ENCODE measurements at regions of chr19 and their contacts with region 1.

Region 1: DNA sequence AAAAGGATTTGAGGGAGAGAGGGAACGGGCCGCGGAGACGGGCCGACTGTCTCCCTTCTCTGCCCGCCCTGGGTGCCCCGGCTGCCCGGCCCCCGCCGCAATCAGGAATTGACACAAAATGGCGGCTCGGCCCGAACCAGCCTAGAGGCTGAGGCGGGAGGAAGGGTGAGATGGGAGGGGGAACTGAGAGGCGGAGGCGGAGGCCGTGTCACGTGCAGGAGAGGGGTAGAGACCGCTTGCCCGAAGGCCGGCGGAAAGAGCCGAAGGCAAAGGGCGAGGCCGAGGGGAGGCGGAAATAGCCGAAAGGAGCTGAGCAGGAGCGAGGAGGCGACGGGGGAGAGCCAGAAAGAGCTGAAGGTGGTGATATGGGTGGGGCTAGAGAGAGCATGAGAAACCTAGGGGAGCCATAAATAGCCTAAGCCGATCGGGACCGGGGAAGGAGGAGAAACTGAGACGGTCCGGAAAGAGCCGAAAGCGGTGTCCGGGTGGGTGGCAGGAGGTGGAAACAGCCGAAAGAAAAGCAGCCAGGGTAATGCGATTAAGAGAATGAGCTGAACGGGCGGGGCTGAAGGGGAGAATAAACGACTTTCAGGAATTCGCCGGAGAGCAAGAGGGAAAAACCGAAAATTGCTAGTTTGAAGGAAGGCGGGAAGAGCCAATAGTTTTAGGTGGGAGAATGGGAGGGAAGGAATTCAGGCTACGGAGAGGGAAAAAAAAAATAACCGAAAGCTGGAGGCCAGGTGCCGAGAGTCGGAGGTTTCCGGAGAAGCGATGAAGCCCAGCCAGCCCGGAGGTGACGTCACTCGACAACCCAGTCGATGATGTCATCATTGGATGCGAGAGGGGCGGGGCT is at the start of gene ZC3H4:
- DNase-seq: peak; percentile 100
- H3K4me3 ChIP-seq: peak within 1 kb of the TSS; percentile 96
- H3K27ac ChIP-seq: peak within 1 kb of the TSS; percentile 100
- H3K4me1 ChIP-seq: peaks cover 25% of the 10 kb centered on the region
- H3K27me3 ChIP-seq: no peaks in the 10 kb centered on the region
- CTCF ChIP-seq: no peak
- total RNA-seq, gene ZC3H4: 94.4 and 94.8 TPM in 2 replicates

Region 2: DNA sequence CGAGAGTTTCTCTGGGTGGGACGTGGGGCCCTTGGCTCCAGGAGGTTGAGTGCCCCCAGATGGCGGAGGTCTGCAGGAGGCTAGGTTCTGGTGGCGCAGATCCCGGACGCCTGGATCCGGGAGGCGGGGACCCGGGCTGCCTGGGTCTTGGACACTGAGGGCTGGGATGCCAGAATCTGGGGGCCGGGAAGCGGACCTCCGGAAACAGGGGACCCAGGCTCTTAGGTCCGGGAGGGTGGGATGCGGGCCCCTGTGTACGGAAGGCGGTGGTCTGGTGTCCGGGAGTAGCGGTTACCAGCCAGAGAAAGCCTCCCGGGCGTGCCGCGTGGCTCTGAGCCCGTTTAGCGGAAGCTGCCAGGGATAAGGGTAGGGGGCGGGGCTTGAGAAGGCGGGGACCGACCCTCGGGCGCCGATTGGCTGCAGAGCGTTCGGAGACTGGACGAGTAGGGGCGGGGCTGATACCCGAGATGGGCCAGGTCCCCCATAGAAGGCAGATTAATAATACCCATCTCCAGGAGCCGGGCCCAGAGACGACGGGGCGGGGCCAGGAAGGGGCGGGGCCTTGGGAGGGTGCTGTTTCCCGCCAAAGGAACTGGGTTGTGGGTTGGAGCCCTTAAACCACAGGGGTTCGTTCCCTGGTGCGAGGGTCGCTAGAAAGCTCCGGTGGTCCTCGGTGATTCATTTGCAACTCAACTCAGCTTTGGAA is 324.8 kb before region 1 on chr19 and contains the start of gene SLC1A5:
- CTCF ChIA-PET with region 1: no interaction called
- POLR2A ChIA-PET with region 1: no interaction called
- intact Hi-C with region 1: loop called (anchors 10 kb)
- DNase-seq: peak; percentile 99
- H3K4me3 ChIP-seq: peak within 1 kb of the TSS; percentile 99
- H3K27ac ChIP-seq: peak within 1 kb of the TSS; percentile 92
- H3K4me1 ChIP-seq: peaks cover 23% of the 10 kb centered on the region
- H3K27me3 ChIP-seq: no peaks in the 10 kb centered on the region
- CTCF ChIP-seq: no peak
- total RNA-seq, gene SLC1A5: 283 and 295 TPM in 2 replicates

Region 3: GRCh38 chr19:46860125-46860845 is 252.9 kb before region 1 on chr19:
- CTCF ChIA-PET with region 1: no interaction called
- POLR2A ChIA-PET with region 1: no interaction called
- intact Hi-C with region 1: loop called (anchors 1 kb)
- DNase-seq: peak; percentile 100
- H3K4me3 ChIP-seq: peak overlapping the region; percentile 88
- H3K27ac ChIP-seq: peak overlapping the region; percentile 100
- H3K4me1 ChIP-seq: peaks cover 43% of the 10 kb centered on the region
- H3K27me3 ChIP-seq: no peaks in the 10 kb centered on the region
- CTCF ChIP-seq: no peak

Region 4: GRCh38 chr19:46932346-46932745 is 180.9 kb before region 1 on chr19:
- CTCF ChIA-PET with region 1: interaction called, 13 read pairs
- POLR2A ChIA-PET with region 1: no interaction called
- intact Hi-C with region 1: no loop called
- DNase-seq: no peak
- H3K4me3 ChIP-seq: no peak overlapping the region
- H3K27ac ChIP-seq: no peak overlapping the region
- H3K4me1 ChIP-seq: peaks cover 43% of the 10 kb centered on the region
- H3K27me3 ChIP-seq: no peaks in the 10 kb centered on the region
- CTCF ChIP-seq: no peak

Region 5: GRCh38 chr19:46975925-46976782 is 137.1 kb before region 1 on chr19:
- CTCF ChIA-PET with region 1: no interaction called
- POLR2A ChIA-PET with region 1: no interaction called
- intact Hi-C with region 1: no loop called
- DNase-seq: peak; percentile 73
- H3K4me3 ChIP-seq: no peak overlapping the region
- H3K27ac ChIP-seq: peak overlapping the region; percentile 85
- H3K4me1 ChIP-seq: peaks cover 57% of the 10 kb centered on the region
- H3K27me3 ChIP-seq: no peaks in the 10 kb centered on the region
- CTCF ChIP-seq: no peak

Region 6: DNA sequence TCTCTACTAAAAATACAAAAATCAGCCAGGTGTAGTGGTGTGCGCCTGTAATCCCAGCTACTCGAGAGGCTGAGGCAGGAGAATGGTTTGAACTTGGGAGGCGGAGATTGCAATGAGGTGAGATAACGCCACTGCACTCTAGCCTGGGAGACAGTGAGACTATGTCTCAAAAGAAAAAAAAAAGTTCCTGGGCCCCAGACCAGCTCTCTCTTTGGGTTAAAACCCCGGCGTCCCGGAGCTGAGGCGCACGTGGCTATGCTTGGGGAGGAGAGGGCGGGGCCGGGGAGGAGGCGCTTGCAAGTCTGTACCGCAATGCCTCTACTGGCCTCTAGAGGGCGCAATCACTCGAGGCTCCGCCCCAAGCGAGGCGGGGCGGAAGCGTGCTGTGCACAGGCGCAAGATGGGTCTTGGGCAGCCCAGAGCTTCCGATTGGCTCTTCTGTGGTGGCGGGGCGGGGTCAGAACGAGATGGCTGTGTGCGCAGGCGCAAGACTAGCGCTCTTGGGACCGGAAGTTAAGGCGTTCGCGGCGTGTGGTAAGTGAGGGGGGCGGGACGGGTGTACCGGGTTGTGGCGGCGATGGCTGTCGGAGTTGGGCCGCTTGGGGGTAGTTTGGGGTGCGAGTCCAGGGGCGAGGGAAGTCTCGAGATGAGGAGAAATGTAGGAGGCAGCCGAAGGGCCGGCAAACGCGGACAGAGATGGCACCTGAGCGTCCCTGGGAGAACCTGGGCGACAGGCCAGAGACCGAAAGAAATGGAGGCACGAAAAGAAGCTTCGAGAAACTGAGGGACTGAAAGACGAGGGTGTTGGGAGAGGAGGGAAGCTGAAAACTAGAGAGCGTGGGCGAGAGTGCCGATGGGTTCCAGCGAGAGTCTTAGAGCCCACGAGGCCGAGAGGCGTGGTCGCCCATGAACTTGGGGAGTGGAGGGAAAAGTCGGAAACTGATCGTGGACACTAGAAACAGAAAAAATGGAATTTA is 235.9 kb after region 1 on chr19 and contains the start of gene DHX34:
- CTCF ChIA-PET with region 1: no interaction called
- POLR2A ChIA-PET with region 1: interaction called, 15 read pairs
- intact Hi-C with region 1: no loop called
- DNase-seq: peak; percentile 99
- H3K4me3 ChIP-seq: peak within 1 kb of the TSS; percentile 67
- H3K27ac ChIP-seq: peak within 1 kb of the TSS; percentile 76
- H3K4me1 ChIP-seq: peaks cover 8% of the 10 kb centered on the region
- H3K27me3 ChIP-seq: no peaks in the 10 kb centered on the region
- CTCF ChIP-seq: peak; percentile 99
- total RNA-seq, gene DHX34: 24.5 and 29.6 TPM in 2 replicates